ENCODE measurements at regions of chr7 and their contacts with region 1.

Region 1: GRCh38 chr7:99392677-99393354 is 15.6 kb downstream of the PDAP1 start:
- DNase-seq: peak; percentile 61 to 93 (median 87)
- ATAC-seq: peak; percentile 96
- H3K4me3 ChIP-seq: peak overlapping the region; percentile 48 to 50
- H3K4me3 Mint-ChIP-seq: peak overlapping the region; percentile 85
- H3K27ac ChIP-seq: peak overlapping the region; percentile 54 to 78
- H3K27ac Mint-ChIP-seq: peak overlapping the region; percentile 93
- H3K4me1 ChIP-seq: peaks cover 18% of the 10 kb centered on the region
- H3K4me1 Mint-ChIP-seq: peaks cover 17% of the 10 kb centered on the region
- H3K27me3 ChIP-seq: no peaks in the 10 kb centered on the region
- H3K27me3 Mint-ChIP-seq: no peaks in the 10 kb centered on the region
- CTCF ChIP-seq: no peak

Region 2: DNA sequence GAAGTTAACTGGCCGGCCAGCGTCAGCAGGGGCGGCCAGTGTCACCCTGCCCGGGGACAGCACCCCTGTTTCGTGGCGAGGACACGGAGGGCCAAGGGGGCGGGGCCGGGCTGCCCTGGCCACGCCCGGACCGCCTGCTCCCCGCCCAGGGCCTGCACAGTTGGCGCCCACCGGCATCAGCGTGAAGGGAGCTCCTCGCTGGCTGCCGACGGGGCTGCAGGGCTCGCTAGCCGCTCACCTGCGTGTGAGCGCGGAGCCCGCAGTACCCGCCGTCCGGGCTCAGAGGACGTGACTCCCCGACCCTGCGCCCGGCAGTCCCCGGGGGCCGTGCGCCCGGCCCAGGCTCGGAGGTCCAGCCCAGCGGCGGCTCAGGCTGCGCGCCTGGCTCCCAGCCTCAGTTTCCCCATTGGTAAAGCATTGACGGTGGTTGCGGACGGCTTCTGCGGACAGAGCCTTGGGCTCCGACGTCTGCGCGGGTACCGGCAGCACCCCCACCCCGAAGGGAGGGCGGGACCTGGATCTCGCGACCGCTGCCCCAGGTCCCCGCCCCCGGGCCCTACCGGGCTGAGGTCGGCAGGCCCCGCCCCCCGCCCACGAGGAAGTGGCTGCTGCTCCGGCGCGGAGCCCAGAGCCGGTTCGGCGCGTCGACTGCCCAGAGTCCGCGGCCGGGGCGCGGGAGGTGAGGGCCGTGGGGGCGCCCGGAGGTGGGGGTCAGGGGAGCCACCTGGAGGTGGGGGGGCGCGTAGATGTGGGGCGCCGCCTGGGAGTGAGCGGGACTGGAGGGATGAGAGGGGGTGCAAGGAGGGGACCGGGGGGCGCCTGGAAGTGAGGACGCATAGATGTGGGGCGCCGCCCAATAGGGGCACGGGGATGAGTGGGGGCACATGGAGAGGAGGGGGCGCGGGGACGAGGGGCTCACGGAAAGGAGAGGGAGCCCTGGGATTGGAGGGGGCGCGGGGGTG is 18.4 kb before region 1 on chr7 and contains the start of gene ARPC1B:
- CTCF ChIA-PET with region 1: interaction called, 3 read pairs
- POLR2A ChIA-PET with region 1: interaction called, 25 read pairs
- intact Hi-C with region 1: loop called in 1 of 2 experiments (anchors 1 kb)
- DNase-seq: peak; percentile 69 to 94 (median 86)
- ATAC-seq: peak; percentile 55
- H3K4me3 ChIP-seq: peak within 1 kb of the TSS; percentile 70 to 90
- H3K4me3 Mint-ChIP-seq: peak within 1 kb of the TSS; percentile 84
- H3K27ac ChIP-seq: peak within 1 kb of the TSS; percentile 84 to 91
- H3K27ac Mint-ChIP-seq: peak within 1 kb of the TSS; percentile 96
- H3K4me1 ChIP-seq: peaks cover 55% of the 10 kb centered on the region
- H3K4me1 Mint-ChIP-seq: peaks cover 36% of the 10 kb centered on the region
- H3K27me3 ChIP-seq: no peaks in the 10 kb centered on the region
- H3K27me3 Mint-ChIP-seq: no peaks in the 10 kb centered on the region
- CTCF ChIP-seq: no peak
- total RNA-seq, gene ARPC1B: 68.5 to 70.5 TPM

Region 3: GRCh38 chr7:99380032-99380822 is 12.6 kb before region 1 on chr7:
- CTCF ChIA-PET with region 1: interaction called, 3 read pairs
- POLR2A ChIA-PET with region 1: interaction called, 25 read pairs
- intact Hi-C with region 1: loop called in 1 of 2 experiments (anchors 1 kb)
- DNase-seq: peak in 4 of 9 experiments; percentile 38 to 76 (median 46)
- ATAC-seq: peak; percentile 5
- H3K4me3 ChIP-seq: peak overlapping the region; percentile 43 to 57
- H3K4me3 Mint-ChIP-seq: peak overlapping the region; percentile 84
- H3K27ac ChIP-seq: peak overlapping the region; percentile 82 to 100
- H3K27ac Mint-ChIP-seq: peak overlapping the region; percentile 99
- H3K4me1 ChIP-seq: peaks cover 83% of the 10 kb centered on the region
- H3K4me1 Mint-ChIP-seq: peaks cover 61% of the 10 kb centered on the region
- H3K27me3 ChIP-seq: no peaks in the 10 kb centered on the region
- H3K27me3 Mint-ChIP-seq: no peaks in the 10 kb centered on the region
- CTCF ChIP-seq: no peak